ENCODE measurements at regions of chr1 and their contacts with region 1.

Region 1: GRCh38 chr1:53482466-53483181 is 23.4 kb downstream of the DMRTB1 start:
- DNase-seq: no peak
- H3K4me3 ChIP-seq: no peak overlapping the region
- H3K27ac ChIP-seq: no peak overlapping the region
- H3K4me1 ChIP-seq: no peaks in the 10 kb centered on the region
- H3K27me3 ChIP-seq: no peaks in the 10 kb centered on the region
- CTCF ChIP-seq: no peak
- POLR2A ChIP-seq: no peak

Region 2: GRCh38 chr1:53754484-53755312 is 272.1 kb after region 1 on chr1:
- intact Hi-C with region 1: loop called (anchors 5 kb)
- DNase-seq: no peak
- H3K4me3 ChIP-seq: no peak overlapping the region
- H3K27ac ChIP-seq: no peak overlapping the region
- H3K4me1 ChIP-seq: no peaks in the 10 kb centered on the region
- H3K27me3 ChIP-seq: no peaks in the 10 kb centered on the region
- CTCF ChIP-seq: peak; percentile 45 to 78 (median 76)
- POLR2A ChIP-seq: no peak

Region 3: DNA sequence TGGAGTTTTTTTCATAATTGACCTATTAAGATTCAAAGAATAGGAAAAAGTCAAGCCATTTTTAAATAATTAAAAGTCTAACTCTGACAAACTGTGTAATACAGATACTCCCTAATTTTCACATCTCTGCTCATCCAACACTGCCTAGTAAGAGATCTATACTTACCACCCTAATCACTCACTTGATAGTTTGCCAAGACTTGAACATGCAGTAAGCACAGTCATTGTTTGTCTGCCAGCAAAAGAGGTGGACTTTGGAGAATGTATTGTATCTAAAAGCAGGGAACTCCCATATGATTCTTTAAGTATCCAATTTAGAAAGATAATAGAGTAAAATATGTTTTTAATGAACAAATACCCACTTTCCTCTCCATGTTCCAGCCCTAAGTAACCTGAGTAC is 554.9 kb after region 1 on chr1:
- intact Hi-C with region 1: no loop called
- DNase-seq: no peak
- H3K4me3 ChIP-seq: no peak overlapping the region
- H3K27ac ChIP-seq: no peak overlapping the region
- H3K4me1 ChIP-seq: no peaks in the 10 kb centered on the region
- H3K27me3 ChIP-seq: no peaks in the 10 kb centered on the region
- CTCF ChIP-seq: no peak
- POLR2A ChIP-seq: no peak